PC-3 (cell line): ENCODE measurements at regions of chr7 and their contacts with region 1.

Region 1: DNA sequence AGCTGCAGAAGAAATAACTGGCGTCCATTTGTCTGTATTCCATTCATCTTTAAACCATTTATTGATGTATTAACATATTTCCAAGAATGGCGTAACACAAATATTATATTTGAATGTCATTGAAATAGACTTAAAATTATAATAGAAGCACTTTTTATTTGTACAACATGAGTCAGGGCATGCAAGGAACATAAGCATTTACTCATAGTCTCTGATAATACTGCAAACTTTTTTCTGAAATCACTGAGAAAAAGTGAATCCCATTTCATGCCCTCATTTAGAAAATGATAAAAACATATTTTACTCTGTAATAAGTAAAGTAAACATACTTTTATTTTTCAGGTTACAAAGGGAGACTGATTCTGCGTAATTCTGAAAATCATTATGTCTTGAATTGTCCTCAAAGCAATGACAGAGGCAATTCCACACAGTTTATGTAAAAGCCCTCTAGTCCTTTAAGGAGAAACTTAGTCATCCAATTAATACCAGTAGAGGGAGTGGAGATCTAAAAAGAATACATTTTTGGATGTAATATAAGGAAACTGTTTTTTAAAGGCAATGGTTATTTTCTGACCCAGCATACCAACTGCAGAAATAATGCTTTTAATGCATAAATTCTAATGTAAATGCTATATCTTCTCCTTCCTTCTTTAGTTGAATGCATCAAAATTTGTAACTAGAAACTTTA is 58.1 kb downstream of the AGMO start:
- DNase-seq: peak; percentile 43
- ATAC-seq: peak; percentile 74
- H3K4me3 ChIP-seq: no peak overlapping the region
- H3K27ac ChIP-seq: peak overlapping the region; percentile 32
- H3K4me1 ChIP-seq: peaks cover 5% of the 10 kb centered on the region; the same call in 1 of the 2 replicates
- H3K27me3 ChIP-seq: no peaks in the 10 kb centered on the region
- CTCF ChIP-seq: peak; percentile 35; the same call in 1 of the 2 replicates

Region 2: DNA sequence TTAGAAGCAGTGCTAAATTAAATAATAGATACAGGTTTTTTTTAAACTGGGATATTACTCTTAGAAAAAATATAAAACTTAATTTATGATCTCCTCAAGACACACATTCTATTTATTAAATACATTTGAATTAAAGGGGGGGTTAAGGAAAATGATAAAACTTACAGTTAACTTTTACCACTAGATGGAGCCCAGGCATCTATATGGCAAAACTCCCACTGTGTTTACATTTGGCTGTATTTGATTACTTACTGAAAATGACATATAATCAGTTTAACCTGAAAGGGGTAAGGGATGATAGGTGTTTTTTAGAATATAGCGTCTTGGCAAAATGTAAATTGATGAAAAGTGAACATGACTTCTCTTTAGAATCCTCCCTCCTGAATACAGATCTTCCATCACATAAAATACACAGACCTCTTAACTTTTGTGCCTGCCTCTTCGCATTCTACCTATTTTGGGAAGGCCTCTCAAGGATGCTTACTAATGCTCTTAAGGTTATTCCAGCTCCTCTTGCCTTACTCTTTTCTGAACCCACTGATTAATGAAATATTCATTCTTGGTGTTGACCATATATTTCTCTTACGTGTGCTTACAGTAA is 177.6 kb before region 1 on chr7:
- CTCF ChIA-PET with region 1: no interaction called
- POLR2A ChIA-PET with region 1: no interaction called
- intact Hi-C with region 1: loop called (anchors 2 kb)
- DNase-seq: peak; percentile 59
- ATAC-seq: peak; percentile 53; the same call in 1 of the 2 replicates
- H3K4me3 ChIP-seq: no peak overlapping the region
- H3K27ac ChIP-seq: no peak overlapping the region
- H3K4me1 ChIP-seq: no peaks in the 10 kb centered on the region
- H3K27me3 ChIP-seq: peaks cover 5% of the 10 kb centered on the region
- CTCF ChIP-seq: peak; percentile 77

Region 3: GRCh38 chr7:15461576-15461975 is 42.2 kb before region 1 on chr7:
- CTCF ChIA-PET with region 1: no interaction called
- POLR2A ChIA-PET with region 1: no interaction called
- intact Hi-C with region 1: loop called (anchors 5 kb)
- DNase-seq: peak; percentile 57
- ATAC-seq: peak; percentile 60
- H3K4me3 ChIP-seq: no peak overlapping the region
- H3K27ac ChIP-seq: peak overlapping the region; percentile 47; the same call in 1 of the 2 replicates
- H3K4me1 ChIP-seq: peaks cover 11% of the 10 kb centered on the region
- H3K27me3 ChIP-seq: 0 out of 2 replicates have a peak, but pooled peaks cover 4% of the 10 kb centered on the region
- CTCF ChIP-seq: no peak

Region 4: DNA sequence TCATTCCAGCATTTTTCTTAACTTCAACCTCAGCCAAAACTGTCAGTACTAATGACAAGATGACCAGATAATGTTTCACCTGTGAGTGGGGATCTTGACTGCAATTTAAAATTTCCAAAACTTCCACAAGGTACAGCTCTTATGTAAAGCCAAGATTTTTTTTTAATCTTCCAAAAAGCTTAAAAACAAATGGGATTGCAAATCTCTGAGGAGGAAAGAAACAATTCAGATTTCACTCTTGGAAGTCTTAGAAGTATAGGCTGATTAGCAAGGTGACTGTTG is 32.1 kb before region 1 on chr7:
- CTCF ChIA-PET with region 1: no interaction called
- POLR2A ChIA-PET with region 1: no interaction called
- intact Hi-C with region 1: no loop called
- DNase-seq: no peak
- ATAC-seq: no peak; the same call in 1 of the 2 replicates
- H3K4me3 ChIP-seq: no peak overlapping the region
- H3K27ac ChIP-seq: no peak overlapping the region
- H3K4me1 ChIP-seq: no peaks in the 10 kb centered on the region
- H3K27me3 ChIP-seq: no peaks in the 10 kb centered on the region
- CTCF ChIP-seq: no peak

Region 5: GRCh38 chr7:15921576-15921975 is 417.8 kb after region 1 on chr7:
- CTCF ChIA-PET with region 1: no interaction called
- POLR2A ChIA-PET with region 1: no interaction called
- intact Hi-C with region 1: loop called (anchors 5 kb)
- DNase-seq: peak; percentile 83
- ATAC-seq: peak; percentile 51
- H3K4me3 ChIP-seq: peak overlapping the region; percentile 56
- H3K27ac ChIP-seq: peak overlapping the region; percentile 72
- H3K4me1 ChIP-seq: peaks cover 15% of the 10 kb centered on the region
- H3K27me3 ChIP-seq: no peaks in the 10 kb centered on the region
- CTCF ChIP-seq: peak; percentile 35; the same call in 1 of the 2 replicates